Activated CD8-positive, alpha-beta T cell treated with anti-CD3 and anti-CD28 coated beads for 36 hours (primary cell): ENCODE measurements at regions of chr10 and their contacts with region 1.

Region 1: DNA sequence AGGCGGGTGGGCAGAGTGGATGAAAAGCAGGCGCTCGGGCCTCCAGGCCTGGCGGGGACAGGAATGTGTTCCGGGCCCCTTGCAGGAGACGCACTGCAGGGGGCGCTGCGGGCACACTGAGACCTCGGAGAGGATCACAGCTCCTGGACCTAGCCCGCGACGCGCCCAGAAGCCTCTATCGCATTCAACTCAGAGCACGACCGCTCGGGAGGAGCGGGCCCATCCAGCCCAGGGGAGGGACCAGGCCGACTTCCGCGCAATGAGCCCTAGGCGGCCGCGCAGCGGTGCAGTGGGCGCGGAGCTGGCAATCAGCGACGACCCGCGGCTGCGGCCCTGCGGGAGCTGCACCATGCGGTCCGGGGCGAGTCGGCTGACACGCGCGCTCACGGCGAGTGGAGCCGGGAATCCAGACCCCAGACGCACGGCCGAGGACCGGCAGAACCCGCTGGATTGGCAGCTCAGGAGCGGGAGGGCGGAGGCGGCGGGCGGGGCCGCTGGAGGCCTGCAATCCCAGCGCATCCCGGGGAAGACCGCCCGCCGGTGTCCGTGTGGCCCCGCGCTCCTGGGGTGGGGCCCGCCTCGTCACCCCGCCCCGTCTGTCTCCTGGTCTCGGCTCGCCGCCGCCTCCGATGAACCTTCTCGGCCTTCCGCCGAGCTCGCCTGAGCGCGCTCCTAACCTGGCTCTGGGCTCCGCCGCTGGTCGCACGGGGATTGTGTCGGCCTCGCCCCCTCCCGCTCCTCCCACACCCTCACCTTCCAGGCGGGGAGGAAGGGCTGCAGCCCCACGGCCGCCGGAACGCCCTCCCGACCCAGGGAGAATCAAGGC is 33.5 kb upstream of the GRID1 start:
- DNase-seq: peak; percentile 98
- ATAC-seq: peak; percentile 90
- H3K4me3 Mint-ChIP-seq: peak overlapping the region; percentile 88
- H3K27ac Mint-ChIP-seq: peak overlapping the region; percentile 90
- H3K4me1 Mint-ChIP-seq: peaks cover 21% of the 10 kb centered on the region
- H3K27me3 Mint-ChIP-seq: no peaks in the 10 kb centered on the region
- CTCF ChIP-seq: peak; percentile 88

Region 2: GRCh38 chr10:86411281-86411841 is 11.3 kb after region 1 on chr10:
- CTCF ChIA-PET with region 1: interaction called, 71 read pairs
- POLR2A ChIA-PET with region 1: interaction called, 32 read pairs
- intact Hi-C with region 1: no loop called
- DNase-seq: peak; percentile 66
- ATAC-seq: peak; percentile 81
- H3K4me3 Mint-ChIP-seq: peak overlapping the region; percentile 66
- H3K27ac Mint-ChIP-seq: peak overlapping the region; percentile 87
- H3K4me1 Mint-ChIP-seq: peaks cover 47% of the 10 kb centered on the region
- H3K27me3 Mint-ChIP-seq: no peaks in the 10 kb centered on the region
- CTCF ChIP-seq: no peak

Region 3: DNA sequence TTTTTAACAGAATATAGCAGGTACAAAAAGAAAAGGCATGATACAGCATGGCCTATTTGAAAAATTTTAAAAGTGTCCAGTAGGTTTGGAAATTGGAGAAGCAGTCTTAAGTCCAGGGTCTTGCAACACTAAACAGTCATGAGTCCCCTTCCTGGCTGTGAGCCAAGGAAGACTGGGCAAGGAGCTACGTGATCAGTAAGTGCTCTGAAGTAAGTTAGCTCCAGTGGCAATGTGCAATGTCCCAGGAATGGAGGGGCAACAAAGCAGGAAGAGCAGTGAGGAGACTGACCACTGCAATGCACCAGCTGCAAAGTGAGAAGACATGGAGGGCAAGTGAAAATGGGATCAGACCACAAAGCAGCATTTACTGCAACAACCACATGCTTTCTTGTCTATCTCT is 39.5 kb after region 1 on chr10:
- CTCF ChIA-PET with region 1: interaction called, 18 read pairs
- POLR2A ChIA-PET with region 1: interaction called, 3 read pairs
- intact Hi-C with region 1: loop called (anchors 10 kb)
- DNase-seq: no peak
- ATAC-seq: no peak
- H3K4me3 Mint-ChIP-seq: no peak overlapping the region
- H3K27ac Mint-ChIP-seq: peak overlapping the region; percentile 74
- H3K4me1 Mint-ChIP-seq: peaks cover 25% of the 10 kb centered on the region
- H3K27me3 Mint-ChIP-seq: no peaks in the 10 kb centered on the region
- CTCF ChIP-seq: no peak

Region 4: DNA sequence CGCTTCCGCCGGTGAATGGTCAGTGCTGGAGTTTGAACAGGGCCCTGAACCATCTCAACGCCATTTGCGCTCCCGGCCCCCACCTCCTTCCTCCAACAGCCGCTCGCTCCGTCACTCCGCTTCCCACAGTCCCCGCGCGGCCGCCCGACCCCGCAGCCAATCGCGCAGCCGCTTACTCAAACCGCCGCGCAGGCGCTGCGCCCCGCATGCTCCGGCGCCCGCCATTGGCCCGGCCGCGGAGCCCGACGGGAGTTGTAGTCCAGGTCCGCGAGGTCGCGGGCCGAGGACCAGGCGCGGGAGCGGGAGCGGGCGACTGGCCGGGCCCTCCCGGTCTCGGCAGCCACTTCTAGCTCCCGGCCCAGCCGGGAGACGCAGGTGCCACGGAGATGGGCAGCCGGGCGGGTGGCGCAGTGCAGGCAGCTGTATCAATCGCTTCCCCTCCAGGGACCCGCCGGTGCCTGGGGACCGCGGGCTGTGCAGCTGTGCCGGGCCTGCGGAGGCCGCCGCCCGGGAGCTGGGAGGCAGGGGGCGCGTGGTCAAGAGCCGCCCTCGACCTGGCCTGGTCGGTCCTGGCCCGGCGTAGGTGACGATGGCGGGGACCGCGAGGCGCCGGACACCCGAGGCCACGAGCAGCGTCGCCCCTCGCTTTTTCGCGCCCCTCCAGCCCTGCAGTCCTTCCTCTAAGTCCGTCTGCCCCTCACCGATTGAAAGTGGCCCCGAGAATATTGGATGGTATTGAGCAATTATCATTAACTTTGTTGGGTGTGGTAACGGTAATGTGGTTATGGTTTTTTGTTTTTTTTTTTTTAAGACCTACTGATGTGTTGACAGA is 121.8 kb after region 1 on chr10 and contains the start of gene WAPL:
- CTCF ChIA-PET with region 1: interaction called, 15 read pairs
- POLR2A ChIA-PET with region 1: interaction called, 10 read pairs
- intact Hi-C with region 1: loop called (anchors 5 kb)
- DNase-seq: peak; percentile 95
- ATAC-seq: peak; percentile 97
- H3K4me3 Mint-ChIP-seq: peak within 1 kb of the TSS; percentile 89
- H3K27ac Mint-ChIP-seq: peak within 1 kb of the TSS; percentile 97
- H3K4me1 Mint-ChIP-seq: peaks cover 57% of the 10 kb centered on the region
- H3K27me3 Mint-ChIP-seq: no peaks in the 10 kb centered on the region
- CTCF ChIP-seq: no peak
- total RNA-seq, gene WAPL: 40.9 to 42.0 TPM